Natural killer cell (primary cell): ENCODE measurements at regions of chr14 and their contacts with region 1.

Region 1: GRCh38 chr14:64986578-64987571 is at the start of gene FNTB:
- DNase-seq: peak; percentile 86 to 97
- ATAC-seq: peak; percentile 90 to 96 (median 92)
- H3K4me3 ChIP-seq: peak within 1 kb of the TSS; percentile 79
- H3K4me3 Mint-ChIP-seq: peak within 1 kb of the TSS; percentile 99
- H3K27ac ChIP-seq: peak within 1 kb of the TSS; percentile 60
- H3K27ac Mint-ChIP-seq: peak within 1 kb of the TSS; percentile 97 to 98
- H3K4me1 ChIP-seq: peaks cover 27% of the 10 kb centered on the region
- H3K4me1 Mint-ChIP-seq: peaks cover 40 to 42% of the 10 kb centered on the region in 2 donors
- H3K27me3 ChIP-seq: no peaks in the 10 kb centered on the region
- H3K27me3 Mint-ChIP-seq: peaks cover 16 to 25% of the 10 kb centered on the region in 2 donors
- CTCF ChIP-seq: peak; percentile 66
- total RNA-seq, gene FNTB: 4.0 to 8.7 (median 8.4) TPM

Region 2: GRCh38 chr14:64671591-64671990 is 315.3 kb before region 1 on chr14:
- intact Hi-C with region 1: loop called (anchors 10 kb)
- DNase-seq: peak in 1 of 2 donors; percentile 80
- ATAC-seq: peak; percentile 54 to 70 (median 58)
- H3K4me3 ChIP-seq: no peak overlapping the region
- H3K4me3 Mint-ChIP-seq: peak overlapping the region; percentile 13
- H3K27ac ChIP-seq: no peak overlapping the region
- H3K27ac Mint-ChIP-seq: peak overlapping the region in 1 of 2 donors; percentile 61
- H3K4me1 ChIP-seq: peaks cover 34% of the 10 kb centered on the region
- H3K4me1 Mint-ChIP-seq: peaks cover 30 to 31% of the 10 kb centered on the region in 2 donors
- H3K27me3 ChIP-seq: no peaks in the 10 kb centered on the region
- H3K27me3 Mint-ChIP-seq: peaks cover 0 to 2% of the 10 kb centered on the region in 2 donors
- CTCF ChIP-seq: peak; percentile 69

Region 3: DNA sequence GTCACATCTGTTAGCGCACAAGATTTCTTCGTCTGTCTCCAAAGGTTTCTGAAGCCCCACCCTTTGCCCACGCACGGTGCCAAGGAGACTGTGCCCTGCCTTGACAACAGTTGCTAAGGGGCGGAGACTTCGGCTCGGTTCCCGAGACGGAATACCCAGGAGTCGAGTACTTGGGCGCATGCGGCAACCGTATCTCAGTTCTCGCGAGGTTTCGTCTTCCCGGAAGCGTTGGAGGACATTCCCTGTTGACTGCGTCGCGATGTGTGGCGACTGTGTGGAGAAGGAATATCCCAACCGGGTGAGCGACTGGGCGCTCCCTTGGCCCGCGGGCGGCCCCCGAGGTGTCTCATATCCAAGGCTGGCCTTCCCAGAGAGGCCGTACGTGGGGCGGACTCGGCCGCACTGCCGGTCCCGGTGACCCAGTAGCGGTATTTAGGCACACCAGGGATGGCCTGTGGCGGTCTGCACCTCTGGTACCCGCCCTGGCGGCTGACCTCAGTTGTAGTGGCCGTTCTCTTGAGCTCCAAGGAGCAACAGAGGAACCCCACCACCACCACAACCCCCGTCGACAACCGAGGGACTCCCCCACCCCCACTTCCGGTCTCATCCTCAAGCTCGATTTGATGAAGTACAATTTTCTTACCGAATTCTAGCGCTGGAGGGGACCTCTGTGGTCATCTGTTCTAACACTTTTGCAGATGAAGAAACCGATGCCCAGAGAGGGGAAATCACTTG is 72.5 kb before region 1 on chr14 and contains the start of gene CHURC1:
- intact Hi-C with region 1: loop called (anchors 1 kb)
- DNase-seq: peak; percentile 88 to 100
- ATAC-seq: peak; percentile 81 to 90 (median 82)
- H3K4me3 ChIP-seq: peak within 1 kb of the TSS; percentile 65
- H3K4me3 Mint-ChIP-seq: peak within 1 kb of the TSS; percentile 96
- H3K27ac ChIP-seq: peak within 1 kb of the TSS; percentile 95
- H3K27ac Mint-ChIP-seq: peak within 1 kb of the TSS; percentile 97 to 98
- H3K4me1 ChIP-seq: peaks cover 14% of the 10 kb centered on the region
- H3K4me1 Mint-ChIP-seq: peaks cover 41 to 50% of the 10 kb centered on the region in 2 donors
- H3K27me3 ChIP-seq: no peaks in the 10 kb centered on the region
- H3K27me3 Mint-ChIP-seq: peaks cover 0 to 3% of the 10 kb centered on the region in 2 donors
- CTCF ChIP-seq: no peak
- total RNA-seq, gene CHURC1: 56.1 to 65.5 (median 65.4) TPM

Region 4: DNA sequence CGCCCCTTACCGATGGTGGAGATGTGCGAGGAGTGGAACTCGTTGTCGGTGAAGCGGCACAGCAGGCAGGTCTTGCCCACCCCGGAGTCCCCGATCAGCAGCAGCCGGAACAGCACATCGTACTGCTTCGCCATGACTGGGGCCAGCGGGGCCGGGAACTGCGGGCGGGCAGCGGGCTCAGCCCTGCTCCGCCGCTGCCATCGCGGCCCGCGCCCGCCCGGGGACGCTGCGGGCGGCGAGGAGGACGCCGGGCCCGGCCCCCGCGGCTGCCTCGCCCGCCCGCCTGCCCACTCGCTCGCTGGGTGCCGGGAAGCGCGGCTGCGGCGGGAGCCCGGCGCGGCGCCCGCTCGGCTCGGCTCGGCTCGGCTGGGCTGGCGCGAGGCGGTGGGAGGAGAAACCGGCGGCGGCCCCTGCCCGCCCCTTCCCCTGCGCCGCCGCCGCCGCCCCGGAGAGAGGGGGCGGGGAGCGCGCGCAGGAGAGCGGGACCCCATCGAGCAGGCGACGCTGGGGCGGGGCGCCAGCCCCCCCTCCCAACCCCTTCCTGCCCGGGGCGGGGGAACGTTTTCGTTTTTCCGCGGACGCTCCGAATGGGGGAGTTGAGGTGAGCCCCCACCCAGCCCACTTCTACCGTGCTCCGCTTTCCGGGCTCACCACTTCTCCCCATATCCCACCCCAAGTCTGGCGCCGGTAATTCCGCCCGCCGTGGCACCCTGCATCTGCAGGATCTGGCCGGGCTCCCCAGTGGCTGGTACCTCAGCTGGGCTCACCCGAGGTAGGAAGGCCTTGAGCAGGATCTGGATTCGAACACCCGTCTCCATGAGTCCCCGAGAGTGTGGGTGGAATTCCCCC is 14.7 kb before region 1 on chr14 and contains the start of gene RAB15:
- intact Hi-C with region 1: no loop called
- DNase-seq: peak; percentile 39 to 65
- ATAC-seq: peak; percentile 70 to 75 (median 73)
- H3K4me3 ChIP-seq: peak within 1 kb of the TSS; percentile 66
- H3K4me3 Mint-ChIP-seq: peak within 1 kb of the TSS; percentile 90
- H3K27ac ChIP-seq: no peak within 1 kb of the TSS
- H3K27ac Mint-ChIP-seq: peak within 1 kb of the TSS in 1 of 2 donors; percentile 69
- H3K4me1 ChIP-seq: peaks cover 18% of the 10 kb centered on the region
- H3K4me1 Mint-ChIP-seq: peaks cover 0 to 16% of the 10 kb centered on the region in 2 donors
- H3K27me3 ChIP-seq: peaks cover 3% of the 10 kb centered on the region
- H3K27me3 Mint-ChIP-seq: no peaks in the 10 kb centered on the region
- CTCF ChIP-seq: no peak
- total RNA-seq, gene RAB15: 0.82 to 3.2 (median 1.7) TPM

Region 5: GRCh38 chr14:65019944-65020566 is 33.2 kb after region 1 on chr14:
- intact Hi-C with region 1: no loop called
- DNase-seq: peak in 1 of 2 donors; percentile 38
- ATAC-seq: peak in 2 of 3 donors; percentile 49 to 79
- H3K4me3 ChIP-seq: no peak overlapping the region
- H3K4me3 Mint-ChIP-seq: no peak overlapping the region
- H3K27ac ChIP-seq: no peak overlapping the region
- H3K27ac Mint-ChIP-seq: no peak overlapping the region
- H3K4me1 ChIP-seq: no peaks in the 10 kb centered on the region
- H3K4me1 Mint-ChIP-seq: no peaks in the 10 kb centered on the region
- H3K27me3 ChIP-seq: no peaks in the 10 kb centered on the region
- H3K27me3 Mint-ChIP-seq: no peaks in the 10 kb centered on the region
- CTCF ChIP-seq: no peak

Region 6: DNA sequence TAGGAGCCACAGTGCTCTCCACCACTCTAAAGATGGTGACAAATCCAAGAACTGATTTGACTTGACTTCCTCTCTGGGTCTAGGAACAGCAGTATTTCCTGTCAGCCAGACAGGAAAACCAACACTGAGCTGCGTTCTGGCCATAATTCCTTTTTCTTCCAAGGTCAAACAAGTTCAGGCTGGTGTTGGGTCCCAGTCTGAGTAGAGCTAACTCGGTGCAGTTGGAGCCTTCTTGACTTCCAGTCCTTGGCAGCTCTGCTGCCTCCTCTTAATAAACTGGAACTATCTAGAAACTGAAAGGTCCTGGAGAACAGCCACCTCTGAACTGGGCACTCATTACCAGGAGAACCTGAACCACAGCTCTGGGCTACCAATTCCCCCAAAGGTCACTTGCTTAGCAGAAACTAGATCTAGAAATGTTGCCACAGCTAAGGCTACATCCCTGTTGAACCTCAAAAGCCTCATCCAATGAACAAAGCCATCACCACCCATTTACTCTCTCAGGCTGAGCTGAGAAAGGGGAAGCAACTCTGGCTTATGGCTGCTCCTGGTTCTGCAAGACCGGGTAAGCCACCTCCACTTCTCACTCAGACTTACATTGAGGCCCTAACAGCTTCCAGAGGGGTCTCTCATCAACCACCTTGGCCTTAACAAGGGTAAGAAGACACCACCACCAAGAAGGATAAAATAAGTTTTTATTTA is 87.7 kb after region 1 on chr14:
- intact Hi-C with region 1: no loop called
- DNase-seq: no peak
- ATAC-seq: peak in 2 of 3 donors; percentile 15 to 53
- H3K4me3 ChIP-seq: no peak overlapping the region
- H3K4me3 Mint-ChIP-seq: no peak overlapping the region
- H3K27ac ChIP-seq: no peak overlapping the region
- H3K27ac Mint-ChIP-seq: peak overlapping the region; percentile 22 to 53
- H3K4me1 ChIP-seq: peaks cover 12% of the 10 kb centered on the region
- H3K4me1 Mint-ChIP-seq: peaks cover 37 to 38% of the 10 kb centered on the region in 2 donors
- H3K27me3 ChIP-seq: no peaks in the 10 kb centered on the region
- H3K27me3 Mint-ChIP-seq: no peaks in the 10 kb centered on the region
- CTCF ChIP-seq: no peak

Region 7: GRCh38 chr14:65412032-65412846 is 425.4 kb after region 1 on chr14 and contains the start of gene FUT8:
- intact Hi-C with region 1: loop called (anchors 5 kb)
- DNase-seq: peak; percentile 82 to 97
- ATAC-seq: peak; percentile 78 to 94 (median 83)
- H3K4me3 ChIP-seq: peak within 1 kb of the TSS; percentile 81
- H3K4me3 Mint-ChIP-seq: peak within 1 kb of the TSS; percentile 98
- H3K27ac ChIP-seq: peak within 1 kb of the TSS; percentile 68
- H3K27ac Mint-ChIP-seq: peak within 1 kb of the TSS; percentile 89 to 93
- H3K4me1 ChIP-seq: peaks cover 10% of the 10 kb centered on the region
- H3K4me1 Mint-ChIP-seq: peaks cover 14 to 22% of the 10 kb centered on the region in 2 donors
- H3K27me3 ChIP-seq: no peaks in the 10 kb centered on the region
- H3K27me3 Mint-ChIP-seq: peaks cover 0 to 2% of the 10 kb centered on the region in 2 donors
- CTCF ChIP-seq: peak; percentile 24
- total RNA-seq, gene FUT8: 20.7 to 29.2 (median 21.2) TPM

Region 8: DNA sequence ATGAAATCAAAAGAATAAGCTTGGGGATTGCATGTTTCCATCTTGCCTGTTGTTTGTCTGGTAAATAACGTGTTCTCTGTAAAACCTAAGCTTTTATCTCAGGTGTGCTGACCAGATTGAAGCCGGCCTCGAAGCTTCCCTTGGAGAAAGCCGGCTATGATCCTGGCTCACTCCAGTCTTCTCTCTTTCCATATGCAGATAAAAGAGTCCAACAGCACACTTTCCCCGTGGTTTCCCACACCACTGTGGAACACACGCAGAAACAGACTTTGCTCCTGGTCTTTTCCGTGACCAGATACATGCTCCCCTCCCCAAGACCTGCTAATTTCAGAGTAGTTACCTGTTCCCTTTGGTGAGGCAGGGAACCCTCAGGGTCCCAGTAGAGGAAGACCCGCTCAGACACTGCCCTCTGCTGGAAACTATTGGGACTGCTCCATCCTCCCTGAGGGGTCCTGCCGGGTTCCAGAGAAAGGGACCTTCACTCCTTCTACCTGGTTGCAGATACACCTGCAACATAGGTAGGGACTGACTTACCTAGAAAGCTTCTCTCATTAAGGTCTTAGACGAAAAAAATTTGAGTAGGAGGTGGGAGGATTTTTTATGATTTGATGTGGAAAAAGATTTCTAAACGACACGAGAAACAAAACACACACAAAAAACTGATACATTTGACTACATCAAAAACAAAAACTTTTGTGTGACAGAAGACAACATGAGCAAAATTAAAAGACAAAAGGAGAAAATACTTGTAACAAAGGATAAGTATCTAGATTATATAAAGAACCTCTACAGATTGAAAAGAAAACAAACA is 1083.8 kb after region 1 on chr14:
- intact Hi-C with region 1: loop called (anchors 10 kb)
- DNase-seq: peak; percentile 55 to 81
- ATAC-seq: peak; percentile 61 to 91 (median 74)
- H3K4me3 ChIP-seq: no peak overlapping the region
- H3K4me3 Mint-ChIP-seq: no peak overlapping the region
- H3K27ac ChIP-seq: no peak overlapping the region
- H3K27ac Mint-ChIP-seq: no peak overlapping the region
- H3K4me1 ChIP-seq: no peaks in the 10 kb centered on the region
- H3K4me1 Mint-ChIP-seq: no peaks in the 10 kb centered on the region
- H3K27me3 ChIP-seq: peaks cover 4% of the 10 kb centered on the region
- H3K27me3 Mint-ChIP-seq: peaks cover 6 to 18% of the 10 kb centered on the region in 2 donors
- CTCF ChIP-seq: peak; percentile 93